H1 (cell line): ENCODE measurements at regions of chr5 and their contacts with region 1.

Region 1: DNA sequence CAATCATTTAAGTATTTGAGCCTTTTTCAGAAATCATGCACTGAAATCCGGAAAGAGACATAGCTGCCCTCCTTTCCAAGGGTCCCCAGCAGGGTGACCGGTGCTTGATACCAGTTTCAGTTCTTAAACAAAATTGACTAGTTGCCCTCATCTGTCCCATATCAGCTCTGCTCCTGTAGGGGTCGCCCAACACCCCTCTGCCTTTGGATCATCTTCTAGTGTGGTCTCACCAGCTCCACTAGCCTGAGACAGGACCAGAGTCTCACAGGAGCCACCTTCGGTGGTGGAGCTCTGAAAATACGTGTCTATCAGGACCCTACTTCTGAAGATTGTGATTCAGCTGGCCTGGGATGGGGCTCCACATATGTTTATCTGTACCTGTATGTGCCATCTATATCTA is 428.2 kb downstream of the ENC1 start:
- DNase-seq: peak in 1 of 2 experiments; percentile 57
- H3K4me3 ChIP-seq: no peak overlapping the region
- H3K27ac ChIP-seq: no peak overlapping the region
- H3K4me1 ChIP-seq: peaks cover 0 to under 1% (median 0%) of the 10 kb centered on the region in 4 experiments; a peak in 1 of 7 replicates
- H3K27me3 ChIP-seq: no peaks in the 10 kb centered on the region
- CTCF ChIP-seq: peak; percentile 69 to 82 (median 74)
- EP300 ChIP-seq: no peak
- POLR2A ChIP-seq: no peak
- RAD21 ChIP-seq: peak; percentile 75 to 85

Region 2: GRCh38 chr5:74201334-74202081 is 10.8 kb before region 1 on chr5:
- CTCF ChIA-PET with region 1: interaction called, 47 read pairs
- POLR2A ChIA-PET with region 1: no interaction called
- DNase-seq: no peak
- H3K4me3 ChIP-seq: no peak overlapping the region
- H3K27ac ChIP-seq: no peak overlapping the region
- H3K4me1 ChIP-seq: peaks cover 0 to 5% (median 2%) of the 10 kb centered on the region in 4 experiments; a peak in 5 of 7 replicates
- H3K27me3 ChIP-seq: no peaks in the 10 kb centered on the region; a peak in 1 of 7 replicates
- CTCF ChIP-seq: no peak
- EP300 ChIP-seq: no peak
- POLR2A ChIP-seq: no peak
- RAD21 ChIP-seq: no peak

Region 3: DNA sequence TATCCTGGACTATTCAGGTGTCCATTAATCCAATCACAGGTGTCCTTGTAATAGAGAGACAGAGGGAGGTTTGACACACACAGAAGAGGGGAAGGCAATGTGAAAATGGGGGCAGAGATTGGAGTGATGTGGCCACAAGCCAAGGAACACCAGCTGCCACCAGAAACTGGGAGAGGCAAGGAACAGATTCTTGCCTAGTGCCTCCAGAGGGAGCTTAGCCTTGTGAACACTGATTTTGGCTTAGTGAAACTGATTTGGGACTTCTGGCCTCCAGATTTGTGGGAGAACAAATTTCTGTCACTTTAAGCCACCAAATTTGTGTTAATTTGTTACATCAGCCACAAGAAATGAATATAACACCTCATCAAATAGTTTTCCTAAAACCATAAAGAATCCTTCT is 12.0 kb after region 1 on chr5:
- CTCF ChIA-PET with region 1: interaction called, 20 read pairs
- POLR2A ChIA-PET with region 1: no interaction called
- DNase-seq: no peak
- H3K4me3 ChIP-seq: no peak overlapping the region
- H3K27ac ChIP-seq: no peak overlapping the region
- H3K4me1 ChIP-seq: no peaks in the 10 kb centered on the region
- H3K27me3 ChIP-seq: no peaks in the 10 kb centered on the region
- CTCF ChIP-seq: peak in 1 of 3 experiments; percentile 8; a peak in 1 of 4 replicates
- EP300 ChIP-seq: no peak
- POLR2A ChIP-seq: no peak
- RAD21 ChIP-seq: no peak